ENCODE measurements at regions of chr19 and their contacts with region 1.

Region 1: GRCh38 chr19:14689598-14690503 is at the start of gene ZNF333:
- DNase-seq: peak; percentile 85 to 100
- H3K4me3 ChIP-seq: peak within 1 kb of the TSS; percentile 72 to 83 (median 78)
- H3K27ac ChIP-seq: peak within 1 kb of the TSS; percentile 90
- H3K4me1 ChIP-seq: no peaks in the 10 kb centered on the region
- H3K27me3 ChIP-seq: no peaks in the 10 kb centered on the region
- CTCF ChIP-seq: no peak
- EP300 ChIP-seq: no peak
- POLR2A ChIP-seq: peak; percentile 53 to 86
- RAD21 ChIP-seq: no peak
- total RNA-seq, gene ZNF333: 7.3 and 7.5 TPM in 2 replicates

Region 2: GRCh38 chr19:14571695-14572490 is 118.0 kb before region 1 on chr19 and contains the start of gene NDUFB7:
- CTCF ChIA-PET with region 1: interaction called, 149 read pairs
- POLR2A ChIA-PET with region 1: interaction called, 14 read pairs
- DNase-seq: peak; percentile 85 to 87
- H3K4me3 ChIP-seq: peak within 1 kb of the TSS; percentile 50 to 98 (median 89)
- H3K27ac ChIP-seq: peak within 1 kb of the TSS; percentile 63
- H3K4me1 ChIP-seq: peaks cover 0 to 4% (median 2%) of the 10 kb centered on the region in 4 experiments; a peak in 3 of 7 replicates
- H3K27me3 ChIP-seq: no peaks in the 10 kb centered on the region
- CTCF ChIP-seq: peak; percentile 87 to 95 (median 90)
- EP300 ChIP-seq: no peak
- POLR2A ChIP-seq: peak in 1 of 2 experiments; percentile 88; a peak in 2 of 3 replicates
- RAD21 ChIP-seq: peak; percentile 32 to 38; a peak in 3 of 4 replicates
- total RNA-seq, gene NDUFB7: 151 and 161 TPM in 2 replicates

Region 3: DNA sequence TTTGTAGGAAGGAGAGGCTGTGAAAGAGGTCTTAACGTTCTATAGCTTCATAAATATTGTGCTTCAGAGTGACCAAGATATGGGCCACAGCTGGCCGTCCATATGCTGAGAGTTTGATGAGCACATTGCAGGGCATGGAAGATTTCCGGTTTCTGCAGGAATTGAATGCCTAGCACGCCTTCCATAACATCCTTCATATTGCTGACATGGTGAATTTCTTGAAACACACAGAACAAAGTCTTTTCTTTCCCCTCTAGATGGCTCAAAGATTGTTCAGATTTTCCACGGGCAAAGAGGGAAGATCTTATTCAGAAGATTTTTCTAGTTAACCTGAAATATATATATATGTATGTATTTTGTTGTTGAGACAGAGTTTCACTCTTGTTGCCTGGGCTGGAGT is 46.1 kb after region 1 on chr19:
- CTCF ChIA-PET with region 1: no interaction called
- POLR2A ChIA-PET with region 1: no interaction called
- DNase-seq: no peak
- H3K4me3 ChIP-seq: no peak overlapping the region
- H3K27ac ChIP-seq: no peak overlapping the region
- H3K4me1 ChIP-seq: no peaks in the 10 kb centered on the region; a peak in 2 of 7 replicates
- H3K27me3 ChIP-seq: no peaks in the 10 kb centered on the region
- CTCF ChIP-seq: no peak
- EP300 ChIP-seq: no peak
- POLR2A ChIP-seq: no peak
- RAD21 ChIP-seq: no peak